IMR-90 (cell line): ENCODE measurements at regions of chr1 and their contacts with region 1.

Region 1: GRCh38 chr1:18902523-18903290 is at the start of gene ALDH4A1:
- DNase-seq: peak; percentile 98
- ATAC-seq: peak; percentile 97
- H3K4me3 ChIP-seq: peak within 1 kb of the TSS; percentile 81
- H3K27ac ChIP-seq: peak within 1 kb of the TSS; percentile 95
- H3K4me1 ChIP-seq: peaks cover 2% of the 10 kb centered on the region
- H3K27me3 ChIP-seq: no peaks in the 10 kb centered on the region
- CTCF ChIP-seq: no peak
- POLR2A ChIP-seq: no peak
- RAD21 ChIP-seq: no peak
- total RNA-seq, gene ALDH4A1: 8.6 TPM in 2 replicates

Region 2: DNA sequence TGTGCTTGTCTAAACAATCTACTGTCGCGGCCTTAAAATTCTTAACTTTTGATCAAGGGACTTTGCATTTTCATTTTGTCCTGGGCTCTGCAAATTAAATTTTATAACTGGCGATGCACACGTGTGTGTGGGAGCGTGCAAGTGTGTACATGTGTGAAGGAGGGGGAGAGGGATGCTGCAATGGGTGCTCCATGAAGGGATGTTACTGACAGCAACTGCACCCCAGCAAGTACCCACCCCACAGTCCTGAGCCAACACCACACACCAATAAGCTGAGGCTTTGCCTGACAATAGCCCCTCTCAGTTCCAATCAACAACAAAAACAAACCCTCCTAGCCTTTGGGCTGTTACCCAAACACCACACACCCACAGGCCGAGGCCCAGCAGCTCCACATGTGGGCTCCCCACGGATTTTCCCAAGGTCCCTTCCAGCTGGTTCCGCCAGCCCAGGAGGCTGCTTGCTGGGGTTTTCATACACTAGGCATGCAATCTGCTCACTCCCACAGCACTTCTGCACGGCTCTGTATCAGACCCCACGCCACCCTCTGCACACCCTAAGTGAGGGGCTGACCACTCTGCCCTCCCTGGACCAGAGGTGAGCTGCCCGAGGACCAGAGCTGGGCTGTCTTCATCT is 86.6 kb after region 1 on chr1:
- CTCF ChIA-PET with region 1: no interaction called
- POLR2A ChIA-PET with region 1: no interaction called
- dilution Hi-C with region 1: no loop called
- in situ Hi-C with region 1: no loop called
- intact Hi-C with region 1: no loop called
- DNase-seq: no peak
- ATAC-seq: no peak
- H3K4me3 ChIP-seq: no peak overlapping the region
- H3K27ac ChIP-seq: no peak overlapping the region
- H3K4me1 ChIP-seq: no peaks in the 10 kb centered on the region
- H3K27me3 ChIP-seq: peaks cover 20% of the 10 kb centered on the region
- CTCF ChIP-seq: no peak
- POLR2A ChIP-seq: no peak
- RAD21 ChIP-seq: no peak

Region 3: GRCh38 chr1:19096036-19096833 is 193.5 kb after region 1 on chr1:
- CTCF ChIA-PET with region 1: interaction called, 7 read pairs
- POLR2A ChIA-PET with region 1: no interaction called
- dilution Hi-C with region 1: no loop called
- in situ Hi-C with region 1: no loop called
- intact Hi-C with region 1: loop called (anchors 1 kb)
- DNase-seq: peak; percentile 7
- ATAC-seq: peak; percentile 24; the same call in 1 of the 2 replicates
- H3K4me3 ChIP-seq: no peak overlapping the region
- H3K27ac ChIP-seq: no peak overlapping the region
- H3K4me1 ChIP-seq: peaks cover 9% of the 10 kb centered on the region
- H3K27me3 ChIP-seq: no peaks in the 10 kb centered on the region
- CTCF ChIP-seq: peak; percentile 34
- POLR2A ChIP-seq: no peak
- RAD21 ChIP-seq: peak; percentile 55